HepG2 (cell line): ENCODE measurements at regions of chr7 and their contacts with region 1.

Region 1: DNA sequence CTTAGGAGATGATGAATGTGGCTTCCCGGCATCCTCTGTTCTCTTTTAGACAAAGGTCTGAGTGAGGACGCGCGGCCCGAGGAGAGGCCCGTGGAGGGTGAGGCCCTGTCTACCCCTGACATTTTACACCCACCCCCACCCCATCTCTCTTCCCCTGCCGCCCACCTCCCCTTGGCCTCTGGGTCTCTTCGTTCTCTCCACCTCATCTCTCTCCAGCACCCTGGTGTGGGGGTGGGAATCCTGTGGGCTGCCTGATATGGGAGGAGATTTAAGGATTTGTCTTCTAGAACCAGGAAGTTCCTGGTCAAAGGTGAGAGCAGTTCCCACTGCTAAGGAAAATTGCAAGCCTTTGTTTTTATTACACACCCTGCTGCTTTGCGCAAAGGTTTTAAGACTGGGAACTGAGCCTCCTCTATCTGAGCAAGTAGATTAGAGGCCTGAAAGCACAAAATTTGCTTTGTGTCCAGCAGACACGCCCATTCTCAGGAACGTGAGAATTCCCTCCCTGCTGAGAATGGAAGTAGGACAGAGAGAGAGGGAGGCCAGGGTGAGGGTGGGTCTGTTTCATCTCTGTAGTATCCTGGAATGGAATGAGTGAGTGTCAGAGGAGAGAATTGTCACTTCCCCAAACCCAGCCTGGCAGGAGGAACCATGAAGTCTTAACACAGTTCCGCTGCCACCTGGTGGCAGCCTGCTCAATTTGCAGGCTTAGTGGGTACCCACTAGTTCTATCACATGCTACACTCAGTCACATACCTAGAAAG is 91.2 kb downstream of the GTF2IRD1 start:
- DNase-seq: peak; percentile 44
- ATAC-seq: peak; percentile 83
- H3K4me3 ChIP-seq: no peak overlapping the region
- H3K27ac ChIP-seq: no peak overlapping the region
- H3K4me1 ChIP-seq: no peaks in the 10 kb centered on the region
- H3K27me3 ChIP-seq: no peaks in the 10 kb centered on the region
- CTCF ChIP-seq: peak; percentile 84
- EP300 ChIP-seq: no peak
- POLR2A ChIP-seq: no peak
- RAD21 ChIP-seq: peak; percentile 60; the same call in 1 of the 2 replicates

Region 2: GRCh38 chr7:74417419-74417971 is 127.4 kb before region 1 on chr7:
- CTCF ChIA-PET with region 1: interaction called, 17 read pairs
- POLR2A ChIA-PET with region 1: no interaction called
- in situ Hi-C with region 1: loop called (anchors 5 kb)
- intact Hi-C with region 1: loop called (anchors 2 kb)
- DNase-seq: peak; percentile 56
- ATAC-seq: peak; percentile 95
- H3K4me3 ChIP-seq: peak overlapping the region in 1 of 3 experiments; percentile 53; a peak in 1 of 6 replicates
- H3K27ac ChIP-seq: no peak overlapping the region
- H3K4me1 ChIP-seq: peaks cover 19% of the 10 kb centered on the region
- H3K27me3 ChIP-seq: no peaks in the 10 kb centered on the region
- CTCF ChIP-seq: peak; percentile 99
- EP300 ChIP-seq: no peak
- POLR2A ChIP-seq: no peak
- RAD21 ChIP-seq: peak; percentile 98

Region 3: DNA sequence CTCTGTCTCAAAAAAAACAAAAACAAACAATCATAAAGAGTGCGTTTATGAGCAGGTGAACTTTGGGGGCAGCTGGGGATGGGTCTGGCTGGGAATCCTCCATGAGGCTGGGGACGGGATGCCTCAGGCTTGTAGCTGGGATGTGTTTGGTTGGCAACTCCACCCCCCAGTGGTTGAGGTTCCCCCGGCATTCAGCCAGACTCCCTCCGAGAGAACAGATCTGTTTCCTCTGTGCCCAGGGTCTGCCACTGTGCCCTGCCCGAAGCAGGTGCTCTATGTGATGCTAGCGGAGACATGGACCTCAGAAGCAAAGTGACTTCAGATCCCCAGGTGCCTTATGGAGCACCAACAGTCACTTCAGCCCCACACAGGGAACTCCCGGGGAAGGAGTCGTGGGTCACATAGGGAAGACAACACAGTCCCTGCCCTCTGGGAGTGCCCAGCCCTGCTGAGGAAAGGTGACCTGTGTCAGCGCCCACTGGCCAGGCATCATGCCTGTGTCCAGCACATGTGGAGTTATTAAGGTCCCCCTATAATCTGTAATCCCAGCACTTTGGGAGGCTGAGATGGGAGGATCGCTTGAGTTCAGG is 120.5 kb before region 1 on chr7:
- CTCF ChIA-PET with region 1: no interaction called
- POLR2A ChIA-PET with region 1: no interaction called
- in situ Hi-C with region 1: loop called (anchors 5 kb)
- intact Hi-C with region 1: loop called (anchors 2 kb)
- DNase-seq: no peak
- ATAC-seq: no peak
- H3K4me3 ChIP-seq: no peak overlapping the region
- H3K27ac ChIP-seq: no peak overlapping the region
- H3K4me1 ChIP-seq: peaks cover 2% of the 10 kb centered on the region
- H3K27me3 ChIP-seq: peaks cover 1 to 11% of the 10 kb centered on the region in 2 experiments; a peak in 2 of 5 replicates
- CTCF ChIP-seq: no peak
- EP300 ChIP-seq: no peak
- POLR2A ChIP-seq: no peak
- RAD21 ChIP-seq: no peak

Region 4: GRCh38 chr7:74449809-74450397 is 95.0 kb before region 1 on chr7:
- CTCF ChIA-PET with region 1: interaction called, 13 read pairs
- POLR2A ChIA-PET with region 1: no interaction called
- in situ Hi-C with region 1: no loop called
- intact Hi-C with region 1: loop called (anchors 1 kb)
- DNase-seq: peak; percentile 61
- ATAC-seq: peak; percentile 27
- H3K4me3 ChIP-seq: no peak overlapping the region
- H3K27ac ChIP-seq: no peak overlapping the region
- H3K4me1 ChIP-seq: peaks cover 26% of the 10 kb centered on the region
- H3K27me3 ChIP-seq: 0 out of 5 replicates have a peak, but pooled peaks cover 0 to 5% of the 10 kb centered on the region in 2 experiments
- CTCF ChIP-seq: peak; percentile 87
- EP300 ChIP-seq: no peak
- POLR2A ChIP-seq: no peak
- RAD21 ChIP-seq: peak; percentile 64

Region 5: GRCh38 chr7:74505471-74506324 is 39.2 kb before region 1 on chr7:
- CTCF ChIA-PET with region 1: no interaction called
- POLR2A ChIA-PET with region 1: no interaction called
- in situ Hi-C with region 1: no loop called
- intact Hi-C with region 1: no loop called
- DNase-seq: no peak
- ATAC-seq: no peak
- H3K4me3 ChIP-seq: no peak overlapping the region
- H3K27ac ChIP-seq: no peak overlapping the region
- H3K4me1 ChIP-seq: no peaks in the 10 kb centered on the region
- H3K27me3 ChIP-seq: no peaks in the 10 kb centered on the region
- CTCF ChIP-seq: no peak
- EP300 ChIP-seq: no peak
- POLR2A ChIP-seq: no peak
- RAD21 ChIP-seq: no peak

Region 6: DNA sequence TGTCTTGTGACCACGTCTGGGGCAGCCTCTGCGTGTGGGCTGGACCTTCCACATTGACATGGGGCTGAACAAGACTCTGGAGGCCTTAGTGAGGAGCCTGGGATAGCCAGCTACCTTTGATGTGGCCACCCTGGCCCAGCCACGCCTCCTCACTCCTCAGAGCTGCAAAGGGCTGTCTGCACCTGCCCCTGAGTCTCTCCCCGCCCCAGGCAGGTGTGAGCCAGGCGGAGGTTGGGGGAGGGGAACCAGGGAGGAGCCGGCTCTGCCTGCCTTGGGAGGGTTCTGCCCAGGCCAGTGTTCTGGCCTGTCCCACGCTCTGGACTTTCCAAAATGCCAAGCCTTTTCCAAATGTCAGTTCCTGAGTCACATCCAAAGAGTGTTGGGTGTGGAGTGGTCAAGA is 19.0 kb before region 1 on chr7:
- CTCF ChIA-PET with region 1: no interaction called
- POLR2A ChIA-PET with region 1: no interaction called
- in situ Hi-C with region 1: no loop called
- intact Hi-C with region 1: no loop called
- DNase-seq: no peak
- ATAC-seq: no peak
- H3K4me3 ChIP-seq: no peak overlapping the region
- H3K27ac ChIP-seq: no peak overlapping the region
- H3K4me1 ChIP-seq: no peaks in the 10 kb centered on the region
- H3K27me3 ChIP-seq: no peaks in the 10 kb centered on the region
- CTCF ChIP-seq: no peak
- EP300 ChIP-seq: no peak
- POLR2A ChIP-seq: no peak
- RAD21 ChIP-seq: no peak

Region 7: GRCh38 chr7:75534727-75535307 is 989.9 kb after region 1 on chr7:
- CTCF ChIA-PET with region 1: no interaction called
- POLR2A ChIA-PET with region 1: no interaction called
- in situ Hi-C with region 1: no loop called
- intact Hi-C with region 1: no loop called
- DNase-seq: no peak
- ATAC-seq: no peak
- H3K4me3 ChIP-seq: no peak overlapping the region
- H3K27ac ChIP-seq: no peak overlapping the region
- H3K4me1 ChIP-seq: peaks cover 11% of the 10 kb centered on the region
- H3K27me3 ChIP-seq: no peaks in the 10 kb centered on the region
- CTCF ChIP-seq: no peak
- EP300 ChIP-seq: no peak
- POLR2A ChIP-seq: no peak
- RAD21 ChIP-seq: no peak